ENCODE measurements at regions of chr3 and their contacts with region 1.

Region 1: GRCh38 chr3:151203051-151203420 is at the start of gene GPR171:
- DNase-seq: peak; percentile 82
- ATAC-seq: peak; percentile 64
- H3K4me3 Mint-ChIP-seq: peak within 1 kb of the TSS; percentile 87
- H3K27ac Mint-ChIP-seq: peak within 1 kb of the TSS; percentile 96
- H3K4me1 Mint-ChIP-seq: peaks cover 54% of the 10 kb centered on the region
- H3K27me3 Mint-ChIP-seq: no peaks in the 10 kb centered on the region
- CTCF ChIP-seq: no peak
- total RNA-seq, gene GPR171: 91.8 to 101 TPM

Region 2: DNA sequence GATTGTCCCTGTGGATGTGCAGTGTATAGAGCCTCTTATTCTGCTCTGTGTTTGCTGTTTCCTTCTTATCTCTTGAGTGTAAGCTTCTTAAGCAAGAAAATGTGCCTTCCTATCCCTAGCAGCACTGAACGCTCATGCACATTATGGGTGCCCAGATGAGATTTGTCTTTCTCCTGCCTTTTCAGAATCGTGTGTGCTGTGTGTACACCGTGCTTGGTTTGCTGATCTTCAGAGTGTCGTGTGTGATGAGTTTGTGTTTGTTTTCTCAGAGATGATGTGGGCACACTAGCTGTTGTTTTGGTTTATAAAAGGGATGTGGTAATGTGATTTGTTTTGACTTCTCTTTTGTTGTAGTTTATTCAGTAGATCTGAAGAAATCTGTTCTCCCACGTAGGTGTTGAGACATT is 19.8 kb before region 1 on chr3:
- CTCF ChIA-PET with region 1: interaction called, 6 read pairs
- POLR2A ChIA-PET with region 1: interaction called, 46 read pairs
- intact Hi-C with region 1: no loop called
- DNase-seq: no peak
- ATAC-seq: peak; percentile 63
- H3K4me3 Mint-ChIP-seq: peak overlapping the region; percentile 67
- H3K27ac Mint-ChIP-seq: peak overlapping the region; percentile 84
- H3K4me1 Mint-ChIP-seq: peaks cover 55% of the 10 kb centered on the region
- H3K27me3 Mint-ChIP-seq: no peaks in the 10 kb centered on the region
- CTCF ChIP-seq: no peak

Region 3: GRCh38 chr3:151191095-151191494 is 11.9 kb before region 1 on chr3:
- CTCF ChIA-PET with region 1: interaction called, 4 read pairs
- POLR2A ChIA-PET with region 1: interaction called, 46 read pairs
- intact Hi-C with region 1: no loop called
- DNase-seq: no peak
- ATAC-seq: peak; percentile 31
- H3K4me3 Mint-ChIP-seq: peak overlapping the region; percentile 9
- H3K27ac Mint-ChIP-seq: peak overlapping the region; percentile 87
- H3K4me1 Mint-ChIP-seq: peaks cover 69% of the 10 kb centered on the region
- H3K27me3 Mint-ChIP-seq: no peaks in the 10 kb centered on the region
- CTCF ChIP-seq: no peak

Region 4: DNA sequence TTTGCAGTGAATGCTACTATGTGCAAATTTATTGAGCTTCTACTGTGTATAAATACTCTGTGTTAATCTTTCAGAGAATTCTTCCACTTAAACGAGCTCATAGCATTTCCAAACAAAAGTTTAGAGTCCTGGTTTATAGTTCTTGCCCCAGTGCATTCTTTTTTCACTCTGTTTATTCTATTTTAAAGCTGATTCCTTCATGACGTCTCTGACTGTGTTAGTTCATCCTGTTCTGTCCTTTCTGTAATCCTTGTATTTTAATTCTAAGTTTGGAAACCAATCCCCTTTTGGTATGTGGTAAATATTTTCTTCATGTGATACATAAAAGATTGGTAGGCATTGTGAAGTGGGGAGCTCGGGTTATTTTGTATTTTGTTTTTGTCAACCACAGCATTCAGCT is 56.6 kb after region 1 on chr3:
- CTCF ChIA-PET with region 1: no interaction called
- POLR2A ChIA-PET with region 1: no interaction called
- intact Hi-C with region 1: no loop called
- DNase-seq: no peak
- ATAC-seq: no peak
- H3K4me3 Mint-ChIP-seq: no peak overlapping the region
- H3K27ac Mint-ChIP-seq: no peak overlapping the region
- H3K4me1 Mint-ChIP-seq: no peaks in the 10 kb centered on the region
- H3K27me3 Mint-ChIP-seq: peaks cover 3% of the 10 kb centered on the region
- CTCF ChIP-seq: no peak